Activated T-helper 1 cell treated with anti-CD3 and anti-CD28 coated beads, Interleukin-12 subunit alpha, Interleukin-12 subunit beta, Interleukin-2, Interleukin-4 antibody, amounts not matched to agents 30 ng/mL and 10 ng/mL and 1 ng/mL, durations not matched to agents 14 hours and 24 hours and 36 hours (primary cell): ENCODE measurements at regions of chr11 and their contacts with region 1.

Region 1: GRCh38 chr11:33829433-33830141 is 55.3 kb upstream of the FBXO3 start:
- DNase-seq: peak; percentile 28
- H3K4me3 Mint-ChIP-seq: peak overlapping the region; percentile 76
- H3K27ac Mint-ChIP-seq: no peak overlapping the region
- H3K4me1 Mint-ChIP-seq: peaks cover 6% of the 10 kb centered on the region
- H3K27me3 Mint-ChIP-seq: peaks cover 51% of the 10 kb centered on the region

Region 2: DNA sequence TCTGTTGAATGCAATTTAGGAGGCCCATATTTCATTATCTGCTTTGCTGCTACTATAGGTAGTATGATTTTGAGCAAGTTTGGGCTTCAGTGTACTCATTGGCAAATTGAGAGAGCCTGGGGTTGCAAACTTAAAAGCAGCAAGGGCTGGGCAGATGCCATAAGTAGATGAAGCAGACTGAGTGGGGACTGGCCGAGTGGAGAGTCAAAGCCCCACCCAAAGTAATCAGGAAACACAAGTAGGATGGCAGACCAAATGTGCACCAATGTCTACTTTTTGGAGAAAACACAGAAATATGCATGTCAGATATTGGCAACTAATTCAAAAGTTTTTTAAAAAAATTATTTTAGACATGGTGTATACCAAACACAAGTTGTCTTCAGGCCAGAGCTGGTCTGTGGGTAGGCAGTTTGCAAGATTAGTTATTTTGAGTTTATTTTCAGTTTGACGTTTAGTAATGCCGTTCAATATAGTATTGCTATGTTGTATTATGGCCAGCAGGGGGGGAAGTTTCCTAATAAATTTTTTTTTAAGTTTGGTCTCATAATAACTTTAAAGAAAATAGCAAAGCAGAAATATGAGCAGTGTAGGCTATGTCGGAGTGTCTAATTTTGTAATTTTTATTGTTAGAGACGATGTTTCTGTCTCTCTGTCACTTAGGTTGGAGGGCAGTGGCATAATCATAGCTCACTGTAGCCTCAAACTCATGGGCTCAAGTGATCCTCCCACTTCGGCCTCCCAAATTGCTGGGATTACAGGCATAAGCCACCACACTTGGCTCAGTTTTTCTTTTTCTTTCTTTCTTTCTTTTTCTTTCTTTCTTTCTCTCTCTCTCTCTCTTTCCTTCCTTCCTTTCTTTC is 467.3 kb before region 1 on chr11:
- intact Hi-C with region 1: loop called (anchors 1 kb)
- DNase-seq: no peak
- H3K4me3 Mint-ChIP-seq: no peak overlapping the region
- H3K27ac Mint-ChIP-seq: no peak overlapping the region
- H3K4me1 Mint-ChIP-seq: no peaks in the 10 kb centered on the region
- H3K27me3 Mint-ChIP-seq: peaks cover 19% of the 10 kb centered on the region

Region 3: GRCh38 chr11:33542921-33543320 is 286.7 kb before region 1 on chr11:
- intact Hi-C with region 1: loop called (anchors 1 kb)
- DNase-seq: no peak
- H3K4me3 Mint-ChIP-seq: no peak overlapping the region
- H3K27ac Mint-ChIP-seq: no peak overlapping the region
- H3K4me1 Mint-ChIP-seq: peaks cover 7% of the 10 kb centered on the region
- H3K27me3 Mint-ChIP-seq: peaks cover 23% of the 10 kb centered on the region

Region 4: DNA sequence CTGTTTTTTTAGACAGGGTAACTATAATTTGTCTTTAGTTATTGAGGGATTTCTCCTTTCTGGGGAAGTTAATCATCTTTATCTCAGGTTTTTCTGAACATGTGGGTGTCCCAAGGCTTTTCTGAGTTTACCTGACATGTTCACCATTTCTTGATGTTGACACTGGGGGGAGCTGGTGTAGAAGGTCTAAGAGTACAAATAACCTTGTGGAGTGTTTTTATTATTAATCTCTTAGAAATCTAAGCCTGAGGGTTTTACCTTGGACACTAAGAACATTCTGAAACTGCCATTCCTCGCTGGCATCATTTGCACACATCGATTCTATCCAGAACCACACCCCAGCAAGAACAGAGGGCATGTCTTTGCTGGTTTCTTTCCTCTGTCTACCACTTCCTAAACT is 113.4 kb before region 1 on chr11:
- intact Hi-C with region 1: loop called (anchors 1 kb)
- DNase-seq: no peak
- H3K4me3 Mint-ChIP-seq: no peak overlapping the region
- H3K27ac Mint-ChIP-seq: no peak overlapping the region
- H3K4me1 Mint-ChIP-seq: peaks cover 15% of the 10 kb centered on the region
- H3K27me3 Mint-ChIP-seq: no peaks in the 10 kb centered on the region

Region 5: GRCh38 chr11:33747979-33748378 is 81.6 kb before region 1 on chr11:
- intact Hi-C with region 1: no loop called
- DNase-seq: no peak
- H3K4me3 Mint-ChIP-seq: no peak overlapping the region
- H3K27ac Mint-ChIP-seq: no peak overlapping the region
- H3K4me1 Mint-ChIP-seq: peaks cover under 1% of the 10 kb centered on the region
- H3K27me3 Mint-ChIP-seq: no peaks in the 10 kb centered on the region

Region 6: DNA sequence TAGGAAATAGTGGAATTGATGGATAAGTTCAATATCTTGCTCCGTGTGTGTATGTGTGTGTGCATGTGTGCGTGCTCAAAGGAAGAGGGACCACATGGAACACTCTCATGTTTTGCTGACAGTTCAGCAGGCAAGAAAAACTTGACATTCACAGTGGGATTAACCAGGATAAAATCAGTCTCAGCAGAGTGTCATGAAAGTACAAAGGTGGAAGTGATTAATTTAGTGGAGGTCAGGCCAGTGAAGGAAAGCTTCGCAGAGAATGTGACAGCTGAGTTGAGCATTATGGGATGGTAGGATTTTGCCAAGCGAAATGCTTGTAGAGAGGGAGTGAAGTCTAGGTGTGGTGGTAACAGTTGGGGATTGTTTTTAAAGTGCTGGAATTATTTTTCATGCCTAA is 39.5 kb before region 1 on chr11:
- intact Hi-C with region 1: no loop called
- DNase-seq: no peak
- H3K4me3 Mint-ChIP-seq: no peak overlapping the region
- H3K27ac Mint-ChIP-seq: no peak overlapping the region
- H3K4me1 Mint-ChIP-seq: peaks cover 8% of the 10 kb centered on the region
- H3K27me3 Mint-ChIP-seq: peaks cover 33% of the 10 kb centered on the region

Region 7: DNA sequence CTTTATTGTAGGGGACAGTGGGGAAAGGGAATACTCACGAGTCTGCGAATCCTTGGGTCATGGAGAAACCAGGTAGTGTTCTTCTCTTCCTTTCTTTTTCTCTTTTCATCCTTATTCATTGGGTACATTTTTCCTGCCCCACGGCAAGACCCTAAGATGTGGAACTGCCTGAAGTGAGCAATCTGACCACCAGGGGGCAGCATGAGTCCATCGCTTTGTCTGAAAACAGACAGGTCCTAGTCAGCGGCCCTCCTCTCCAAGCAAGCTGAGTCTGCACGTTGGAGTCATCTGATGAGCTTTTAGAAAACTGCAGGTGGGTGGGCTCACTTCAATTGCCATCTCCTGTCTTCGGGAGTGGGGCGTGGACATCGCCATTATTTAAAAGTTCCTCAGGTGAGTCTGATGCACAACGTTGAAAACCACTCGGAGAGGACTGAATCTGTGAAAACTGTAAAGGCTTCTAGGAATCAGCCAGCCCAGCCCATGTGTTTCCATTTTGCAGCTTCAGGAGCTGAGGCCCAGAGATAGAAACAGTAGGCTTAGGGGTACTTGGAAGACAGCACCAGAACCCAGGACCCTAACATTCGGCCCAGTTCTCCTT is 21.3 kb before region 1 on chr11:
- intact Hi-C with region 1: loop called (anchors 1 kb)
- DNase-seq: peak; percentile 67
- H3K4me3 Mint-ChIP-seq: no peak overlapping the region
- H3K27ac Mint-ChIP-seq: no peak overlapping the region
- H3K4me1 Mint-ChIP-seq: no peaks in the 10 kb centered on the region
- H3K27me3 Mint-ChIP-seq: peaks cover 33% of the 10 kb centered on the region

Region 8: DNA sequence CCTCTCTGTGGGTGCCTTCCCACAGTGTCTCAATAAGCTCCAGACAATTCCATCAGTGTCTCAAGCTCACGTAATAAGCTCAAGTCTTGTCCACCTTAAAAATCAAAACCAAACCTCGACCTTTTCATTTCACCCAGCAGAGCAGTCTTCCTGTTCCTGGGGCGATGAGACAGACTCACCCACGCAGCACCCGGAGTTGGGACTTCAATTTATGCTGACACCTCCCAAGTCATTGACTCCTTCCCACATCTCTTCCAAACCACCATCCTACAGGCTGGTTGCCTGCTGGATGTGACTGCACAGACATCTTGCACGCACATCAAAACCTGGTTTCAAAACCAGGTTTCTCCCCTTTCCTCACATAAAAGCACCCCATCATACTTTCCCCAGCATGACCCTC is 10.3 kb before region 1 on chr11:
- intact Hi-C with region 1: no loop called
- DNase-seq: no peak
- H3K4me3 Mint-ChIP-seq: no peak overlapping the region
- H3K27ac Mint-ChIP-seq: no peak overlapping the region
- H3K4me1 Mint-ChIP-seq: no peaks in the 10 kb centered on the region
- H3K27me3 Mint-ChIP-seq: peaks cover 18% of the 10 kb centered on the region

Region 9: DNA sequence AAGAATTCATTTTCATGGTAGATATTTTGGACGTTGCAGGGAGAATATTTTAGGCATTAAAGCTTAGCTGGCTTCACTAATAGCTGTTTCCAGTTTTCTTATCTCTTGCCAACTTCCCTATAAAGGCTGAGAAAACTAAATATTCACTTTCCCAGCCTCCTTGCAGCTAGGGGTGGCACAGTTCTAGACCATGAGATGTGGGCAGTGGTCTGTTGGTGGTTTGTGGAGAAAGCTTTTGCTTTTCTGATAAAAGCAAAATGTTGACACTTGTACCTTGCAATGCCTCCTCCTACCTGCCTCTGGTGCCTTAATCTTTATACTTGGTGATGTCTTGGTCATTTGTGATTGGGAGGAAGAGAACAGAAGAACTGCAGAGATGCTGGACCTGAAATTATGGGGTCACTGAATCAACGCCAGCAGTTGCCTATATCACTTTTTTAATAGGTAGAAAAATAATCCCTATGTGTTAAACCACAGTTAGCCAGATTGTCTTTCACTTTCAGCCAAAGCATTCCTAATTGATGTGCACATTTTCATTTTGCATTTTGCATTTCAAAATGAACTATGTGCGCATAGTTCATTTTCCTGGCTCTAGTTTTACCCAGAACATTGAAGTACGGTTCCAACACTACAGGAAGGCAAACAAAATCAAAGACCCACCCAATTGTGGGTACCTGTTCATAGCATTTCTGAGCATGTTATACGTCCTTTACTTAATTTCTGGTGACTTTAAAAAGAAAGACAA is 553.1 kb after region 1 on chr11:
- intact Hi-C with region 1: no loop called
- DNase-seq: no peak
- H3K4me3 Mint-ChIP-seq: no peak overlapping the region
- H3K27ac Mint-ChIP-seq: no peak overlapping the region
- H3K4me1 Mint-ChIP-seq: no peaks in the 10 kb centered on the region
- H3K27me3 Mint-ChIP-seq: peaks cover 12% of the 10 kb centered on the region